Right ventricle myocardium superior (tissue), 1 donor: ENCODE measurements at regions of chr11 and their contacts with region 1.

Region 1: GRCh38 chr11:130069684-130070108 is at the start of gene APLP2:
- DNase-seq: peak; percentile 99
- ATAC-seq: peak; percentile 92
- total RNA-seq, gene APLP2: 268 TPM

Region 2: GRCh38 chr11:130002846-130003716 is 66.6 kb before region 1 on chr11:
- intact Hi-C with region 1: loop called (anchors 2 kb)
- DNase-seq: peak; percentile 96
- ATAC-seq: peak; percentile 91

Region 3: DNA sequence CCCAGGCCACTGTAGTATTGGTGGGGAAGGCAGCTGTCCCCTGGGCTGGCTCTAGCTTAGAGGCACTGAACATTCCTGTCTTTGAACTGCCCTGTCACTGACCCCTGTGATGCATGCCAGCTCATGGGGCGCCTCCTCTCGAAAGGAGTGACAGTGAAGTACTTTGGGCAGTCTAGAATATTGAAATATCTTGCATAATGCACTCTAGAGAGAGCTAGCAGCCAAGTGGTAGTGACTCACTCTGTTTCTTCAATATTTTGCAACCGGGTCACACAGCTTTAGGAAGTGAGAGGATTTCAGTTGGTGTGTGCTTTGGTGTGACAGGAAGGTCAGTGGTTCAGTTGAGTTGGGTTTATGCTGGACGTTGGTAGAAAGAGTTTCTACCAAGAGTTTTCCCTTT is 54.4 kb after region 1 on chr11:
- intact Hi-C with region 1: loop called (anchors 10 kb)
- DNase-seq: peak; percentile 87
- ATAC-seq: peak; percentile 96

Region 4: GRCh38 chr11:130168105-130168504 is 98.4 kb after region 1 on chr11:
- intact Hi-C with region 1: no loop called
- DNase-seq: no peak
- ATAC-seq: no peak